ENCODE measurements at regions of chr9 and their contacts with region 1.

Region 1: DNA sequence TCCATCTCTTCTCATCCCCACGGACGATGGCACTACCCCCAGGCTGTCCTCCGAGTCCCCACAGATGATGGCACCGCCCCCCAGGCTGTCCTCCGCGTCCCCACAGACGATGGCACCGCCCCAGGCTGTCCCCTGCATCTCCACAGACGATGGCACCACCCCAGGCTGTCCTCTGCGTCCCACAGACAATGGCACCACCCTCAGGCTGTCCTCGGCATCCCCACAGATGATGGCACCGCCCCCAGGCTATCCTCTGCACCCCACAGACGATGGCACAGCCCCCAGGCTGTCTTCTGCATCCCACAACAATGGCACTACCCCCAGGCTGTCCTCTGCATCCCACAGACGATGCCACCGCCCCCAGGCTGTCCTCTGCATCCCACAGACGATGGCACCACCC is 57.4 kb upstream of the PTCH1 start:
- DNase-seq: no peak
- ATAC-seq: no peak

Region 2: GRCh38 chr9:95528908-95529502 is 45.2 kb before region 1 on chr9:
- intact Hi-C with region 1: loop called (anchors 2 kb)
- DNase-seq: no peak
- ATAC-seq: no peak

Region 3: DNA sequence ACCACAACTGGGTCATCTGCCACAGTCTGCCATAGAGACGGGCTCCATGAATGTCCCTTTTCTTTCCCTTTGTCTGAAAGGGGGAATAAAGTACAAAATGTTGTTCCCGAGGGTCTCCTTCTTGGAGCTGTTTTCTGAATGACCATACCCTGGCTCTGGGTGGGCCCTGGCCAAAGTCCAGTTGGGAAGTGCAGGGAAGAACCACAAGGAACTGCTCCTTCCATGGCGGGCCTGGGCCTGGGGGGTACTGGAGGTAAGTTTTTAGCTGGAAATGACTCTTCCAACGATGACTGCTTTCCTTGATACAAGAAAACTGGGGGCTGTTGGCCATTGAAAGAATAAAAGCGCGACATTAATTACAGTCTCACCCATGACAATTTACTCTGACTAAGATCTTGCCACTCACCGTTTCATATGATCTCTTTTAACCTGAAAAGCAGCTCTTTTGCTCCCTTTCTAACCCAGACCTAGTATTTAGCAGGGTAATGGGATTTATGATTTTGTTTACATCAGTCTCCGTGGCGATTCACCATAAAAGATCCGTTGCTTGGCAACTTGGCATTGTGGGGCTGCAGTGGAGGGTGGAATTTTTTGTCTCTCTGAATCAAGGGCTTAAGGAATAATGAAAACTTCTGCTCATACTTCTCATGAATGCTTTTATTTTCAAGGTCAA is 31.8 kb after region 1 on chr9:
- intact Hi-C with region 1: no loop called
- DNase-seq: no peak
- ATAC-seq: no peak

Measured in sciatic nerve (tissue), 2 donors.